ENCODE measurements at regions of chr5 and their contacts with region 1.

Region 1: DNA sequence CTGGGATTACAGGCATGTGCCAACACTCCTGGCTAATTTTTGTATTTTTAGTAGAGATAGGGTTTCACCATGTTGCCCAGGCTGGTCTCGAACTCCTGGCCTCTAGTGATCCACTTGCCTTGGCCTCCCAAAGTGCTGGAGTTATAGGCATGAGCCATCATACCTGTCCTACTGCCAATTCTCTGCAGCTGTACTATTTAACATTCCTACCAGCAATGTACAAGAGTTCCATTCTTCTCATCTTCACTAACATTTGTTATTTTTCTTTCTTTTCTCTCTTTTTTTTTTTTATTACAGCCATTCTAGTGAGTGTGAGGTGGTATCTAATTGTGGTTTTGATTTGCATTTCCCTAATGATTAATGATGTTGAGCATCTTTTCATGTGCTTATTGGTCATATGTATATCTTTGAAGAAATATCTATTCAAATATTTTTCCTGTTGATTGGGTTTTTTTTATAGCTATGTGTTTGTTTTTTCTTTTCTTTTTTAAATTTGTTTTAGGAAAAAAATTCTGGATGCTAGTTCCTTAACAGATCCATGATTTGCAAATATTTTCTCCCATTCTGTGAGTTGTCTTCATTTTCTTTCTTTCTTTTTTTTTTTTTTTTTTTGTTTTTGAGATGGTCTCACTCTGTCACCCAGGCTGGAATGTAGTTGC is 17.4 kb downstream of the ANKHD1 start:
- DNase-seq: no peak
- H3K4me3 ChIP-seq: no peak overlapping the region
- H3K27ac ChIP-seq: no peak overlapping the region
- H3K4me1 ChIP-seq: peaks cover 7% of the 10 kb centered on the region
- H3K27me3 ChIP-seq: no peaks in the 10 kb centered on the region
- CTCF ChIP-seq: no peak
- EP300 ChIP-seq: no peak
- POLR2A ChIP-seq: no peak

Region 2: GRCh38 chr5:141914199-141914743 is 1495.3 kb after region 1 on chr5:
- intact Hi-C with region 1: loop called in 1 of 4 experiments (anchors 5 kb)
- DNase-seq: peak in 3 of 5 donors; percentile 35 to 58 (median 42)
- H3K4me3 ChIP-seq: peak overlapping the region; percentile 31
- H3K27ac ChIP-seq: no peak overlapping the region
- H3K4me1 ChIP-seq: peaks cover 2% of the 10 kb centered on the region
- H3K27me3 ChIP-seq: no peaks in the 10 kb centered on the region
- CTCF ChIP-seq: no peak
- EP300 ChIP-seq: no peak
- POLR2A ChIP-seq: no peak